ENCODE measurements at regions of chr5 and their contacts with region 1.

Region 1: DNA sequence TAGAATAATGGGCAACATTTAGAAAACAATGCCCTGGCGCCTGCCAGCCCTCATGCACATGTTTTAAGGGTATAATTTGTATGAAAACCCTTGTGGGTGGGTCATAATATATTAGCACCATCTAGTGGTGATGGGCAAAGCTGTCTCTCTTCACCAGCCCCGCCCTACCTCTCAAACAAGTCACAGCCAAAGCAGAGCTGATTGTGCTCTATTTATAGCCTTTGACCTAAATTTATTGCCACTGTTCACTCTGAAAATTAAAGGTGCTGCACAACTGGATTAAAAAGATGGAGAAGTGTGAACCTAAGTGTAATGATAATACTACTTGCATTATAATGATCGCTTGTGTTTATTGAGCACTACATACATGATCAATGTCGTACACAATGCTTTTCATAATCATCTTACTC is 131.9 kb upstream of the ANKH start:
- DNase-seq: peak; percentile 62
- CTCF ChIP-seq: peak; percentile 72

Region 2: DNA sequence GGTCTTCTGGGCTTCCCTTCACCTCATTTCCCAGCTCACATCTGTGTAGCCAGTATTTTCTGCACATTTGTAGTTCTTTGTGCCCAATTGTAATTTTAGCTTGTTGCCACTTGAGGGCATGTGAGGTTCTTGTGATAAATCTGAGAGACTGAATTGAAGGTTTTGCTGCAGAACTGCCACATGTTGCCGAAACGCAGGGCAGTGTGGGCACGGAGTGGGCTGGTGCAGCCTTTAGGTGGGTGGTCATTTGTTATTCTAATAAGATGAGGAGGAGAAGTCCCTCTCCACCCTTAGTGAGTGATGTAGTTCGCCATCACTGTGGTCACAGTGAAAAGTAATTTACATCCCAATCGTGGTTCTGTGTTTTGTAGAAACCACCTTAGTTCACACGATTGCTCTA is 317.8 kb before region 1 on chr5:
- CTCF ChIA-PET with region 1: interaction called, 28 read pairs
- POLR2A ChIA-PET with region 1: no interaction called
- DNase-seq: peak; percentile 67
- CTCF ChIP-seq: peak; percentile 56

Region 3: GRCh38 chr5:14739538-14739937 is 264.0 kb before region 1 on chr5:
- CTCF ChIA-PET with region 1: interaction called, 14 read pairs
- POLR2A ChIA-PET with region 1: no interaction called
- DNase-seq: no peak
- CTCF ChIP-seq: no peak

Region 4: DNA sequence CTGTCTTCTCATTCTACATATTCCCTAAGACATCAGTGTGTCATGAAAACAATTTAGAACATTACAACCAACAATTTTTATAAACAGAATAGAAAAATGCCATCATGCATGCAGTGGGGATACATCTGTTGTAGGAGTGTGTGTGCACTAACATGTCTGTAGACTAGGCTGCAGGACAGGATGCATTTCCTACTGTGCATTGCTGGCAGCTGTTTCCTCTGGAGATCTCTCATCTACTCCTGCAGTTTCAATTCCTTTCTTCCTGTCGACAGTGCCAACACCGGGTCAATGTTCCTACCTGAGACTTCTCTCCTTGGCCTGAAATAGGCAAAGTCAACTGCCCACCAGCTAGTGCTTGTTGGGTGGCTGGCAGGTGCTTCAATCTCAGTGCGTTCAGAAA is 201.7 kb before region 1 on chr5:
- CTCF ChIA-PET with region 1: no interaction called
- POLR2A ChIA-PET with region 1: no interaction called
- DNase-seq: no peak
- CTCF ChIP-seq: no peak

Region 5: GRCh38 chr5:14956413-14957046 is 47.0 kb before region 1 on chr5:
- CTCF ChIA-PET with region 1: interaction called, 11 read pairs
- POLR2A ChIA-PET with region 1: no interaction called
- DNase-seq: no peak
- CTCF ChIP-seq: no peak

Region 6: DNA sequence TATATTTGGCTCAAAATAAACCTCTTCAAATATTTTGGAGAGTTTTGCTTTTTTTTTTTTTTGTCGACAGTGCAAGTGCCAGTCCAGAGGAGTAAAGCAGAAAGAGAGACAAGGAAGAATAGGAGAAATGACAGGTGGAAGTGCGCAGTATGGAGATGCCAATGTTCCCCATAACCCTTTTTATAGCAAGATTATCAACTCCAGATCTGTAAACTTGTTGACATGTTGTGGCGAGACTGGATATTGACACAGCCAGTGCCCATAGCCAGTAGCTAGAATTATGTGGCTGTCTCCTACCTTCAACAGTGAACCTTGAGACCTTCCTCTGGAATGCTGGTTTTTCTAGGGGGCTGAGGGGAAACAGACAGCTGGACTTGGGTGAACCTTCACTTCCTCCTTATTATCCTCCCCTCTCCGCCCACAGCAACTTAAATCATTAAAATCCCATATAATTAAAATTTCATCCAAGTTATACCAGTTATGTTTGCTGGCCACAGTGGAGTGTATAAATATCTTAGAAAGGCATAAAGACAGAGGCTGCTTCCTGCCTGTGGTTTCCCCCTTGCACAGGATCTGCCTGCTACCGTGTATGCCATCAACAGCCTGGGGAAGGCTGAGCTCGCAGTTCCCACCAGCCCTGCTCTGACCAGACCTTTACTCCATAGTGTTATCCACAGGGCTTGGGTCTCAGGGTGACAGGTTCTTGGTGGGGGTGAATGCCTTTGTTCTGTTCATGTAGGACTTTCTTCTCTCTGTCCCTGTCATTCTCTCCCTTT is 19.7 kb before region 1 on chr5:
- CTCF ChIA-PET with region 1: interaction called, 53 read pairs
- POLR2A ChIA-PET with region 1: no interaction called
- DNase-seq: no peak
- CTCF ChIP-seq: no peak

Region 7: DNA sequence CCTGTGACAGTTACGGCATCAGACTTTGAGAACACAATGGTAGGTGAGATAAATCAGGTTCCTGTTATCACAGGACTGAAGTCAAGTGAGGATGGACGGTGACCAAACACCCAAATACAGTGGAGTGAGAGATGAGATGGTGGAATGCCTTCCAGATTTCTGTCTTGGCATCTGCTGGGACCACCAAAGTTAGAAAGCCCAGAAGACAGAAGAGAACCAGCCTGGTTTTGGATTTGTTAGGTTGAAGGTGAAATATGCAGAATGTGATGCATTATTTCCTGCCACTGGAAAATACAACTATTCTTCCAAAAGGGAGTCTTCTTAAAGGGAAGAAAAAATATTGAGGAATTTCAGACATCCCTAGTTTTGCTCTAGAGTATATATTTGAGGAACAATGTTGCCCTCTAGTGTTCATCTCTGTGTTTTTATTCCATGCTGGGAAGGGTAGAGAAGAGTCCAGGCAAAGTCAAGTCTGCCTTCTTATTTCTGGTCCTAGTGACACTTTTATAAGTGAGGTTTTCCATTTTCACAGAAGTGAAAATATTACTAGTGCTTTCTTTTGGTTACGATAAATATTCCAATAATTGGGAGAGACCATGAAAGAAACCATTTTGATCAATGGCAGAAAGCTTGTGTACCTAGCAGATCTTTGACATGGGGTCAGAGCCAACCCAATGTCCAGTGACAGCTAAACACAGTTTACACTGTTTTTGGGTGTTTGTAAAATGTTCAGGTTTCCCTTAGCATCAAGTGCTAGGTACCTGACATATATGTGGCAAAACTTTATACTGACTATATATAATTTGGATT is 10.3 kb after region 1 on chr5:
- CTCF ChIA-PET with region 1: interaction called, 14 read pairs
- POLR2A ChIA-PET with region 1: no interaction called
- DNase-seq: peak; percentile 35
- CTCF ChIP-seq: peak; percentile 69